Mammary epithelial cell (primary cell): ENCODE measurements at regions of chr20 and their contacts with region 1.

Region 1: DNA sequence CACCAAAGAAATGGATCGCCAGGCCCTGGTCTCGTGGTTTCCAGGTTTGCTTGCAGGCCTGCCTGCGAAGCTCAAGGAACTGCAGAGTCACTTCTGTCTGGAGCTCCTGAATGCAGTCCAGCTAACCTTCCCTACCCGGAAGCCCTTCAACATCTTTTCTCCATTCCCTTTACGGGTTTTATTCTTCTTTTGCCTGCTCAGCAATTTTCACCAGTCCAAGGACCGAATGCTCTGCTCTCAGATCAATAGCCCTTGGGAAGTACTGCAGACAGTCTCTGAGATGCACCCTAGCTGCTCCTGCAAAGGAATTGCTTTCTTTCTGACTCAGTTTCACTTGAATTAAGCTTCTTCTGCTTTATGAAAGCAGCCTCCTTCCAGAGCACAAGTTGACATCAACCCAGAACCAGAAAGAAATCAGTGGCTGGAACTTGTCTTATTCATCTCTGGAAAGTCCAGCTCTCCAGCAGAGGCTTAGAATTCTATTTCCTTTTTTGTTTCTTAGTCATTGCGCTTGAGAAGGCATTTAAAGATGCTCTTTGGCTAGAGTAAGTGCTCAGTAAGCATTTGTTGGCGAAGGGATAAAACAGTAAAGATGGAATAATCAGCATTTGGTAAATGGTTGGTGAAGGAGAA is 18.7 kb upstream of the YWHAB start:
- DNase-seq: peak; percentile 9
- H3K4me3 ChIP-seq: no peak overlapping the region
- H3K27ac ChIP-seq: no peak overlapping the region
- H3K4me1 ChIP-seq: no peaks in the 10 kb centered on the region
- H3K27me3 ChIP-seq: peaks cover 3% of the 10 kb centered on the region
- CTCF ChIP-seq: no peak

Region 2: DNA sequence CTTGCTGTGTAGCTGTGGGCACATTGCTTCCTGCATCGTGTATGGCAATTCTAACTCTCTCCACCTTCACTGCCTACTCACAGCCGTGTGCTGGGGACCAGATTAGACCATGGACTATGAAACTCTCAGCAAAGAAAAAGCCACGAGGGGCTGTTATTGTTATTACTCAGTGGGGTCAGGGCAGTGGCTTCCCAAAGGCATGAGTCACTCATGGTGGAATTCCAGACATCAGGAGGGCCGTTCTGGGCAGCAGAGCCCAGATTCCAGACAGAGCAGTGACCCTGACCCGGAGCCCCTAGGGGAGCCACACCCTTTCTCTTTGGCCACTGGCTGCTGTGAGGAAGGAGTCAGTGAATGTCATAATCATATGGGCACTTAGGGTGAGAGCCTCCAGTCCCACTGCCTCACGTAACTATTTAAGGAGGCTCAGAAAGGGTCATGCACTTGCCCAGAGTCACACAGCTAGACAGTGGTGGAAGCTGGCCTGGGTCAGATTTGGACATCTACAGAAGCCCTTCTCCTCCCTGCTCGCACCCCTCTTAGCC is 173.8 kb before region 1 on chr20:
- CTCF ChIA-PET with region 1: no interaction called
- dilution Hi-C with region 1: no loop called
- in situ Hi-C with region 1: loop called (anchors 5 to 10 kb)
- intact Hi-C with region 1: loop called (anchors 2 kb)
- DNase-seq: peak; percentile 92
- H3K4me3 ChIP-seq: no peak overlapping the region
- H3K27ac ChIP-seq: peak overlapping the region; percentile 16
- H3K4me1 ChIP-seq: peaks cover 14% of the 10 kb centered on the region
- H3K27me3 ChIP-seq: no peaks in the 10 kb centered on the region
- CTCF ChIP-seq: no peak

Region 3: GRCh38 chr20:44738813-44739477 is 127.9 kb before region 1 on chr20:
- CTCF ChIA-PET with region 1: no interaction called
- dilution Hi-C with region 1: loop called (anchors 5 kb)
- in situ Hi-C with region 1: loop called (anchors 5 to 10 kb)
- intact Hi-C with region 1: no loop called
- DNase-seq: peak; percentile 73
- H3K4me3 ChIP-seq: no peak overlapping the region
- H3K27ac ChIP-seq: no peak overlapping the region
- H3K4me1 ChIP-seq: peaks cover 4% of the 10 kb centered on the region
- H3K27me3 ChIP-seq: no peaks in the 10 kb centered on the region
- CTCF ChIP-seq: no peak

Region 4: DNA sequence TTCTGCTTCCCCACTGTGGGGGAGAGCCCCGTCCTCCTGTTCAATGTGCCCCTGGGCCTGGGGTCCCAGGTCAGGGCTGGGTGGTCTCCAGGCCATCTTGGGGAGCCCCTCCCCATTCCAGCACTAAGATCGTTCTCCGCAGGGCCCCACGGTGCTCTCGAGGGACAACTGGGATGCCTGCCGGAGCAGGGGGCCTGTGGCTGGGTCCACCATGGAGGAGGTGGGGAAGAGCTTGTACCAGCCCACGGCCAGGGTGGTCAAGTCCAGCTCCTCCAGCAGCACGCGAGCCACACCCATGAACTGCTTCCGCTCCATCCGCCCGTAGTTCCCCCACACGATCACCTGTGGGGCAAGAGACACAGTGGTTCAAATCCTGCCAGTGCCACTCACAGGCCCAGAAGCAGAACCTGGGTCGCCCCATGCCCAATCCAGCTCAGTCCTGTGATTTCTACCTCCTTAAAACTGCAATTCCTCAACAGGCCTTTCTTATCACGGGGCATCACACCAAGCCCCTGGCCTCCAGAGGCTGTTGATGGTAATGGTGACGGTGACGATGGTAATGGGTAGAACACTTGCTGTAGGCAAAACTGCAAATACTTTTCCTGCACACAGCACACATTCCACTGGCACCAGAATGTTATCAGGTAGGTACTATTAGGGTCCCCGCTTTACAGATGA is 110.7 kb before region 1 on chr20:
- CTCF ChIA-PET with region 1: no interaction called
- dilution Hi-C with region 1: loop called (anchors 5 kb)
- in situ Hi-C with region 1: no loop called
- intact Hi-C with region 1: no loop called
- DNase-seq: no peak
- H3K4me3 ChIP-seq: no peak overlapping the region
- H3K27ac ChIP-seq: no peak overlapping the region
- H3K4me1 ChIP-seq: no peaks in the 10 kb centered on the region
- H3K27me3 ChIP-seq: no peaks in the 10 kb centered on the region
- CTCF ChIP-seq: no peak

Region 5: DNA sequence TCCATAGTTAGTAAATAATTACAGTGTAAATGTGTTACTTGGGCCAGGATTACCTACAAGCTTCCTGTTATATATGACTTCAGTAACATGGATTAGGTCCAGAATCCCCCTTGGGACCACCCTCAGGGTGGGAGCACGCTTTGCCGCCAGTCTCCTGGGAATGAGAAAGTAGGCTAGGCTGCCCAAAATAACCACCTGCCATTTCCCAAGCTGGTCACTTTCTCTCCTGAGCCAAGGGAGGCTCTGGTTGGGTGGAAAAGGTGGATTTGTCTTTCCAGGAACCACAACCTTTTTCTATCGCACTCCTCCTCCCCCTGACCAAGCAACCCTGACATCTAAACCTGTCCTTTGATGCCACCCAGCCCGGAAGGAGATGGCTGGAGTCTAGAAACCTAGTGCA is 46.9 kb before region 1 on chr20:
- CTCF ChIA-PET with region 1: no interaction called
- dilution Hi-C with region 1: loop called (anchors 5 kb)
- in situ Hi-C with region 1: no loop called
- intact Hi-C with region 1: no loop called
- DNase-seq: no peak
- H3K4me3 ChIP-seq: no peak overlapping the region
- H3K27ac ChIP-seq: no peak overlapping the region
- H3K4me1 ChIP-seq: no peaks in the 10 kb centered on the region
- H3K27me3 ChIP-seq: peaks cover 2% of the 10 kb centered on the region
- CTCF ChIP-seq: no peak

Region 6: GRCh38 chr20:44914924-44915323 is 48.1 kb after region 1 on chr20:
- CTCF ChIA-PET with region 1: no interaction called
- dilution Hi-C with region 1: no loop called
- in situ Hi-C with region 1: no loop called
- intact Hi-C with region 1: no loop called
- DNase-seq: no peak
- H3K4me3 ChIP-seq: no peak overlapping the region
- H3K27ac ChIP-seq: no peak overlapping the region
- H3K4me1 ChIP-seq: peaks cover 4% of the 10 kb centered on the region
- H3K27me3 ChIP-seq: no peaks in the 10 kb centered on the region
- CTCF ChIP-seq: no peak

Region 7: GRCh38 chr20:44938637-44939036 is 71.8 kb after region 1 on chr20:
- CTCF ChIA-PET with region 1: no interaction called
- dilution Hi-C with region 1: no loop called
- in situ Hi-C with region 1: no loop called
- intact Hi-C with region 1: no loop called
- DNase-seq: no peak
- H3K4me3 ChIP-seq: no peak overlapping the region
- H3K27ac ChIP-seq: no peak overlapping the region
- H3K4me1 ChIP-seq: no peaks in the 10 kb centered on the region
- H3K27me3 ChIP-seq: no peaks in the 10 kb centered on the region
- CTCF ChIP-seq: no peak